Activated B cell treated with CpG ODN at 0.5 μM for 24 hours (primary cell): ENCODE measurements at regions of chr1 and their contacts with region 1.

Region 1: GRCh38 chr1:86833461-86834215 is 80.3 kb downstream of the SELENOF start:
- DNase-seq: peak; percentile 22
- ATAC-seq: peak; percentile 88
- H3K4me3 Mint-ChIP-seq: no peak overlapping the region
- H3K27ac Mint-ChIP-seq: peak overlapping the region; percentile 67
- H3K4me1 Mint-ChIP-seq: peaks cover 4% of the 10 kb centered on the region
- H3K27me3 Mint-ChIP-seq: no peaks in the 10 kb centered on the region
- CTCF ChIP-seq: no peak

Region 2: DNA sequence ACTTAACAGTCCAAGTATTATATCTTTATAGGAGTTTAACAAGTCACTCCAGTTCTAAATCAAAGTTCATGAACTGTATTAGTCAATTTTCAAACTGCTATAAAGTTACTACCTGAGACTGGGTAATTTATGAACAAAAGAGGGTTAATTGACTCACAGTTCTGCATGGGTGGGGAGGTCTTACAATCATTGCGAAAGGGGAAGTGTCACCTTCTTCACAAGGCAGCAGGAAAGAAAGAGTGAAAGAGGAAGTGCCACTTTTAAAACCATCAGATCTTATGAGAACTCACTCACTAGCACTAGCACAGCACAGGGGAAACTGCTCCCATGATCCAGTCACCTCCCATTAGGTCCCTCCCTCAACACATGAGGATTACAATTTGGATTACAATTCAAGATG is 216.8 kb before region 1 on chr1:
- CTCF ChIA-PET with region 1: no interaction called
- POLR2A ChIA-PET with region 1: no interaction called
- intact Hi-C with region 1: no loop called
- DNase-seq: no peak
- ATAC-seq: peak; percentile 97
- H3K4me3 Mint-ChIP-seq: peak overlapping the region; percentile 5
- H3K27ac Mint-ChIP-seq: peak overlapping the region; percentile 89
- H3K4me1 Mint-ChIP-seq: peaks cover 39% of the 10 kb centered on the region
- H3K27me3 Mint-ChIP-seq: no peaks in the 10 kb centered on the region
- CTCF ChIP-seq: no peak

Region 3: GRCh38 chr1:86811142-86811924 is 22.3 kb before region 1 on chr1:
- CTCF ChIA-PET with region 1: interaction called, 3 read pairs
- POLR2A ChIA-PET with region 1: interaction called, 12 read pairs
- intact Hi-C with region 1: no loop called
- DNase-seq: no peak
- ATAC-seq: no peak
- H3K4me3 Mint-ChIP-seq: no peak overlapping the region
- H3K27ac Mint-ChIP-seq: no peak overlapping the region
- H3K4me1 Mint-ChIP-seq: no peaks in the 10 kb centered on the region
- H3K27me3 Mint-ChIP-seq: peaks cover 3% of the 10 kb centered on the region
- CTCF ChIP-seq: no peak

Region 4: DNA sequence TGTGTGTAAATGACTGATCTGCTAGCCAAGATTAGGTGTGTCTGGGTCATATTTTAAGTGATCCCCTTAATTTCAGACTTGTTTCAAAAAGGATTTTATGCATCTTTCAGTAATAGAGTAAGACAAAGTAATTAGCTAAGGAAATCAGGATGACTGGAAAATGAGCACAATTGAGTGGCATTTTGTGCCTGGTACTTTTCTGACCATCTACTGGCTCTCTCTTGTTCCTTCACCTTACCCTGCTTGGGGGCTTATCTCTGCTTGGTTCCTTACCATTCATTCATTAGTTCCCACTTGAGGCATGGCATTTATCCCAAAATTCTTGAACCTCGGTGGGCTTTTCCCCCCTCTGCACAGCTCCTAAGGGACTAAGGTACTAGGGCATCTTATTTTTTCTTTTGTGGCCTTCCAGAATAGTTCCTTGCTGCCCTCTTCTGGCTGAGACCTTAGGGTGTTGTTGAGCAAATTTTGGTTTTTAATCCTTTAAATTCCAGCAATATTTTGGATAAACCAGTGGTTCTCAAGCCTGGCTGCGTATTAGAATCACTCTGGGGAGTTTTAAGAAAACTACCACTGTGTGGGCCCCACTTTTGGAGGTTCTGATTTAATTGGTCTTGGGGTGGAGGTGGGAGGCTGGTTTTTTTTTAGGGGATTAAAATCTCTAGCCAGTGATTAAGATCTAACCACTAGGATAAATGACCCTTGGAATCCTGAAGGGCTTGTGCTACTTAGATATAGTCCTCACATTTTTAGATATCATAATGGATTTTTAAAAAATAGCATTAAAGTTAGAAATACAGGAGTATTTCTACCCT is 131.6 kb after region 1 on chr1:
- CTCF ChIA-PET with region 1: interaction called, 29 read pairs
- POLR2A ChIA-PET with region 1: no interaction called
- intact Hi-C with region 1: loop called (anchors 1 kb)
- DNase-seq: no peak
- ATAC-seq: peak; percentile 34
- H3K4me3 Mint-ChIP-seq: no peak overlapping the region
- H3K27ac Mint-ChIP-seq: peak overlapping the region; percentile 14
- H3K4me1 Mint-ChIP-seq: peaks cover 12% of the 10 kb centered on the region
- H3K27me3 Mint-ChIP-seq: no peaks in the 10 kb centered on the region
- CTCF ChIP-seq: no peak

Region 5: DNA sequence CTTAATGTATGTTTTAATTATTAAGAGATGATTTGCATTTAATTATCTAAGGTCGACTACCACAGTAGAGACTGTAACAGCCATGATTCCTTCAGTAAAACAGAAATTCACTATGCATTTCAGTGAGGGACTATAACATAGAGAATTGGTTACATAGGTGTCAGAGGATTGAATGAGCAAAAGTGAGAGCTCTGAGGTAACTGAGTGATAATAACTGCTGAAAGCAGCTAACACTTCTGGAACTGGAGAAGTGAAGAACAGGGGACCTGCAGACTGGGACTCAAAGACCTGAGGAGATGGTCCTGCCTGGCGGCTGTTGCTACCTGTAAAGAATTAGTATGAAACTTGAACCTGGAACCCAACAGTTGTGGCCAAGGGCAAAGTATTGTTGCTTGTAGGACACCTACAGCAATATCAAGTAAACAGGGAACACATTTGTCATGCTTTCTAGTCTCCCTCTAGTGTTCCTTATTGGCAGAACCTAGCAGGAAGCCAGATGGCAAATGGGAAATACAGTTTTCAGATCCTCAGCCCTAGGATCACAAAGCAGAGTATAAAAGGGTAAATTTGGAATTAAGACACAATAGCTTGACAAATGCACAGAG is 191.4 kb after region 1 on chr1:
- CTCF ChIA-PET with region 1: no interaction called
- POLR2A ChIA-PET with region 1: no interaction called
- intact Hi-C with region 1: loop called (anchors 1 kb)
- DNase-seq: no peak
- ATAC-seq: peak; percentile 21
- H3K4me3 Mint-ChIP-seq: no peak overlapping the region
- H3K27ac Mint-ChIP-seq: no peak overlapping the region
- H3K4me1 Mint-ChIP-seq: peaks cover 21% of the 10 kb centered on the region
- H3K27me3 Mint-ChIP-seq: no peaks in the 10 kb centered on the region
- CTCF ChIP-seq: no peak